PC-9 (cell line): ENCODE measurements at regions of chr7 and their contacts with region 1.

Region 1: DNA sequence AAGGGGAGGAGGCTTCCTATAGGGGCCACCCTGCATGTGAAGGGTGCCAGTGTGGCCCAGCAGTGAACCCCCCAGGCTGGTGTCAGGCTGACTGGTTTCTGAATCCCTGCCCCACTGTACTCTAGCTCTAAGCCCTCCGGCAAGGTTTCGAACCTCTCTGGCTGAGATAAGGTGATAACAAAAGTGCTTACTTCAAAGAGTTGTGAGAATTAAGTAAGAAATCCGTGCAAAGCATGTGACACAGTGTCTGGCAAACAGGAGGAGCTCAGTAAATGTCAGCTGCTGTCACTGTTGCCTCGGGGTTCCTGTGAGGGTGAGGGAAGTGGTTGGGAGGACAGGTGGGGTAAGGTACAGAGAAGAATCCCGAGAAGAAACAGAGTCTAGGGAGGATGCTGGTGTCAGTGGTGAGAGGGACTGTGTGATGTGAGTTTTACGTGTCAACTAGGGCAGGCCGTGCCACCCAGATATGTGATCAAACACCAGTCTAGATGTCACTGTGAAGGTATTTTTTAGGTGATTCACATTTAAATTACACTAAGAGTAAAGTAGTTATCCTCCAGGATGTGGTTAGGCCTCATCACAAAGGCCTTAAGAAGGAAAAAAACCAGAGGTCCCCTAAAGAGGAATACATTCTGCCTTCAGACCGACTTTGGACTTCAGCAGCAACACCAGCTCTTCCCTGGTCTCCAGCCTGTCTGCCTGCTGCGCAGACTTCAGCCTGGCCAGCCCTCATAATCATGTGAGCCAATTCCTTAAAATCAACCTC is 64.4 kb downstream of the BPGM start:
- DNase-seq: no peak
- H3K4me3 ChIP-seq: no peak overlapping the region
- H3K27ac ChIP-seq: no peak overlapping the region
- H3K4me1 ChIP-seq: no peaks in the 10 kb centered on the region; the same call in 1 of the 2 replicates
- H3K27me3 ChIP-seq: no peaks in the 10 kb centered on the region
- CTCF ChIP-seq: no peak

Region 2: GRCh38 chr7:134891262-134891695 is 180.2 kb after region 1 on chr7:
- CTCF ChIA-PET with region 1: no interaction called
- POLR2A ChIA-PET with region 1: no interaction called
- intact Hi-C with region 1: loop called (anchors 5 kb)
- DNase-seq: peak; percentile 85 to 89
- H3K4me3 ChIP-seq: peak overlapping the region; percentile 63
- H3K27ac ChIP-seq: peak overlapping the region; percentile 43
- H3K4me1 ChIP-seq: peaks cover 43% of the 10 kb centered on the region
- H3K27me3 ChIP-seq: no peaks in the 10 kb centered on the region
- CTCF ChIP-seq: no peak